Dorsolateral prefrontal cortex (tissue), 120 donors: ENCODE measurements at regions of chr12 and their contacts with region 1.

Region 1: GRCh38 chr12:130013771-130014484 is 110.1 kb upstream of the TMEM132D start:
- DNase-seq: peak; percentile 67 to 91 (median 88)
- H3K4me3 ChIP-seq: peak overlapping the region in 56 of 59 donors; percentile 5 to 58 (median 38)
- H3K27ac ChIP-seq: peak overlapping the region in 16 of 59 donors; percentile 9 to 70 (median 42)
- H3K27me3 ChIP-seq: peaks cover 0 to 5% (median 0%) of the 10 kb centered on the region in 45 donors
- CTCF ChIP-seq: peak; percentile 54 to 90 (median 78)

Region 2: GRCh38 chr12:128783129-128783574 is 1230.8 kb before region 1 on chr12:
- intact Hi-C with region 1: loop called in 1 of 2 experiments (anchors 10 kb)
- DNase-seq: no peak
- H3K4me3 ChIP-seq: no peak overlapping the region
- H3K27ac ChIP-seq: no peak overlapping the region
- H3K27me3 ChIP-seq: no peaks in the 10 kb centered on the region
- CTCF ChIP-seq: no peak

Region 3: GRCh38 chr12:130104571-130105106 is 90.7 kb after region 1 on chr12:
- intact Hi-C with region 1: no loop called
- DNase-seq: no peak
- H3K4me3 ChIP-seq: peak overlapping the region in 31 of 59 donors; percentile 0 to 53 (median 28)
- H3K27ac ChIP-seq: peak overlapping the region in 2 of 59 donors; percentile 13 to 14
- H3K27me3 ChIP-seq: peaks cover 0 to 38% (median 6%) of the 10 kb centered on the region in 45 donors
- CTCF ChIP-seq: no peak

Region 4: GRCh38 chr12:130126023-130126432 is 112.1 kb after region 1 on chr12:
- intact Hi-C with region 1: no loop called
- DNase-seq: no peak
- H3K4me3 ChIP-seq: no peak overlapping the region
- H3K27ac ChIP-seq: no peak overlapping the region
- H3K27me3 ChIP-seq: peaks cover 0 to 5% (median 0%) of the 10 kb centered on the region in 45 donors
- CTCF ChIP-seq: no peak